ENCODE measurements at regions of chr9 and their contacts with region 1.

Region 1: GRCh38 chr9:69582544-69583297 is 89.5 kb downstream of the APBA1 start:
- DNase-seq: no peak
- ATAC-seq: peak; percentile 62
- H3K4me3 ChIP-seq: no peak overlapping the region
- H3K4me3 Mint-ChIP-seq: no peak overlapping the region
- H3K27ac ChIP-seq: no peak overlapping the region
- H3K27ac Mint-ChIP-seq: no peak overlapping the region
- H3K4me1 ChIP-seq: no peaks in the 10 kb centered on the region
- H3K4me1 Mint-ChIP-seq: peaks cover 0 to 6% (median 0%) of the 10 kb centered on the region in 7 donors
- H3K27me3 ChIP-seq: no peaks in the 10 kb centered on the region
- H3K27me3 Mint-ChIP-seq: peaks cover 5 to 16% (median 8%) of the 10 kb centered on the region in 5 donors

Region 2: GRCh38 chr9:69324549-69325401 is 257.9 kb before region 1 on chr9 and contains the start of gene ENTREP1:
- CTCF ChIA-PET with region 1: no interaction called
- POLR2A ChIA-PET with region 1: no interaction called
- intact Hi-C with region 1: no loop called
- DNase-seq: no peak
- ATAC-seq: no peak
- H3K4me3 ChIP-seq: no peak within 1 kb of the TSS
- H3K4me3 Mint-ChIP-seq: peak within 1 kb of the TSS in 5 of 10 donors; percentile 14 to 40 (median 37)
- H3K27ac ChIP-seq: no peak within 1 kb of the TSS
- H3K27ac Mint-ChIP-seq: no peak within 1 kb of the TSS
- H3K4me1 ChIP-seq: no peaks in the 10 kb centered on the region
- H3K4me1 Mint-ChIP-seq: peaks cover 0 to 11% (median 6%) of the 10 kb centered on the region in 7 donors
- H3K27me3 ChIP-seq: no peaks in the 10 kb centered on the region
- H3K27me3 Mint-ChIP-seq: peaks cover 30 to 72% (median 56%) of the 10 kb centered on the region in 5 donors
- total RNA-seq, gene ENTREP1: not detected

Region 3: DNA sequence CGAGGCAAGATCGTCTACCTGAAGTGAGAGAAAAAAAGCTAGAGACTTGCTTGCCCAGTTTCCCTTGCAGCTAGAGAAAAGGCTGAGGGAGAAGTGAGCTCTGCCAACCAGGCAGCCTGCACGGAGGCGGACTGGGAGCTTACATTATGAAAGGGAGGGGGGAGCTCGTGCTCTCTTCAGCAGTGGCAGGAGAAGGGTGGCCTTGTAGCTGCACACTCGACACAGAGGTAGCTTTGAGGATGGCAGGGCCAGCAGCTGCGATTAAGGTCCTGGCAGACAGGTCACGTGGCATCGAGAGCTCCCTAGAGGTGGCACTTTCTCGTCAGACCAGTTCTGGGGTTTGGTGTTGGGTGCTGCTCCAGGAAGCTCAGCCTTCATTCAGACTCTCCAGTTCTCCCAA is 62.8 kb after region 1 on chr9:
- CTCF ChIA-PET with region 1: no interaction called
- POLR2A ChIA-PET with region 1: no interaction called
- intact Hi-C with region 1: loop called in 1 of 2 experiments (anchors 10 kb)
- DNase-seq: no peak
- ATAC-seq: no peak
- H3K4me3 ChIP-seq: no peak overlapping the region
- H3K4me3 Mint-ChIP-seq: no peak overlapping the region
- H3K27ac ChIP-seq: no peak overlapping the region
- H3K27ac Mint-ChIP-seq: no peak overlapping the region
- H3K4me1 ChIP-seq: no peaks in the 10 kb centered on the region
- H3K4me1 Mint-ChIP-seq: no peaks in the 10 kb centered on the region
- H3K27me3 ChIP-seq: no peaks in the 10 kb centered on the region
- H3K27me3 Mint-ChIP-seq: peaks cover 0 to 10% (median 7%) of the 10 kb centered on the region in 5 donors

Region 4: DNA sequence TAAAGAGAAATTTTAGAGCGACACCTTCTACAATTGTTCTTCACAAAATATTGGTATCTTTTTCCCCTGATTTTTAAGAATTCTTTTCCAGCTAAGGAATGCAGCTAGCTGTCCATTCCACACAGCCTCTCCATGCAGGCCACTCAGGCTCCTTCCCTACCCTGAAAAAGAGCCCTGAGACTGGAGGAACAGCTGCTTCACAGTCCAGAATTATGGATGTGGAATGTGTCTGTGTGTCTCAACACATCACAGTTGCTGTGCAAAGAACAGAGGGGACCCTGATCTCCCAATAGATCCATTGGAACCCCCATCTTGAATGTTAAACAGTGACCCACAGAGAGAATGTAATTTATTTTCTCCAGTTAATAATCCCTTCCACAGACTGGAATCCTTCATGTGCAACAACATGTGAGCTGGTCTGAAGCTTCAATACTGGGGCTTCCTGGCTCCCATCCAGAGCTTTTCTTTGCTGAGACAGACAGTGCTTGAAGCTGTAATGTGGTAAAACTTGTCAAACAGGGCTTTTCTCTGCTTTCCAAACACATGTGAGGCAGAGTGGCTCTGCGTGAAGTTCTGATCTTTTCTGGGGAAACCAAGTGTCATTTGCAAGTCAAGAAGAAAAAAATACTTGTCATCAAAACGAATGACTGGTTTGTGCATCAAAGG is 622.8 kb after region 1 on chr9:
- CTCF ChIA-PET with region 1: no interaction called
- POLR2A ChIA-PET with region 1: no interaction called
- intact Hi-C with region 1: no loop called
- DNase-seq: no peak
- ATAC-seq: no peak
- H3K4me3 ChIP-seq: no peak overlapping the region
- H3K4me3 Mint-ChIP-seq: no peak overlapping the region
- H3K27ac ChIP-seq: no peak overlapping the region
- H3K27ac Mint-ChIP-seq: no peak overlapping the region
- H3K4me1 ChIP-seq: no peaks in the 10 kb centered on the region
- H3K4me1 Mint-ChIP-seq: no peaks in the 10 kb centered on the region
- H3K27me3 ChIP-seq: no peaks in the 10 kb centered on the region
- H3K27me3 Mint-ChIP-seq: no peaks in the 10 kb centered on the region